Activated naive CD4-positive, alpha-beta T cell treated with anti-CD3 and anti-CD28 coated beads for 36 hours (primary cell): ENCODE measurements at regions of chr15 and their contacts with region 1.

Region 1: DNA sequence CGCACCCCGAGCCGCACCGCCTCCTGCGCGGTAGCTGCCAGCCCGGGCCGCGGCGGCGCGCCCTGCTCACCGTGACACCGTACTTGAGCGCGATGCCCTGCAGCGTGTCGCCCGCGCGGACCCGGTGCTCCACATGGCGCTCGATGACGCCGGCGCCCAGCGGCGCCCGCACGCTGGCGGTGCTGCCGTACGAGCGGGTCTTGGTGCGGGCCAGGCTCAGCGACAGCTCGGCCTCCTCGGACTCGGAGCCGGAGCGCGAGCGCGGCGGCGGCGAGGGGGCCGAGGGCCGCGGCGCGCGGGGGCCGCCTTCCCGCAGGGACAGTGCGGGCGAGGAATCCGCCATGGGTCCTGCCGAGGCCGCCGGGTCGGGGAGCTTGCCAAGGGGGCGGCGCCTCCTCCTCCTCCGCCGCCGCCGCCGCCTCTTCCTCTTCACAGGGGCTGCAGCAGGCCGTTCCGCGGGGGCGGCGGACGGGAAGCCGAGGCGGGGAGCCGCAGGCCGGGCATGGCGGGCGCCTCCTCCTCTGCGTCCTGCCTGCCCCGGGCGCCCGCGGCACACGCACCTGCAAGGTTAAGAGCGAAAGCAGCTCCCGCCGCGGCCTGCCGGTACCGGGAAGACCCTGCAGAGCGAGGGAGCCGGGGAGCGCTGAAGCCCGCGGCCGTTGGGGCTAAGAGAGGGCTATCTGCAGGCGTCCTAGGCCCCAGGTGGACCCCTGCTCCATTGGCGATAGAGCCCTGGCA is at the start of gene LYSMD2:
- DNase-seq: peak; percentile 66
- H3K4me3 Mint-ChIP-seq: peak within 1 kb of the TSS; percentile 82
- H3K27ac Mint-ChIP-seq: peak within 1 kb of the TSS; percentile 91
- H3K4me1 Mint-ChIP-seq: peaks cover 54% of the 10 kb centered on the region
- H3K27me3 Mint-ChIP-seq: no peaks in the 10 kb centered on the region
- total RNA-seq, gene LYSMD2: 14.5 to 16.8 TPM

Region 2: DNA sequence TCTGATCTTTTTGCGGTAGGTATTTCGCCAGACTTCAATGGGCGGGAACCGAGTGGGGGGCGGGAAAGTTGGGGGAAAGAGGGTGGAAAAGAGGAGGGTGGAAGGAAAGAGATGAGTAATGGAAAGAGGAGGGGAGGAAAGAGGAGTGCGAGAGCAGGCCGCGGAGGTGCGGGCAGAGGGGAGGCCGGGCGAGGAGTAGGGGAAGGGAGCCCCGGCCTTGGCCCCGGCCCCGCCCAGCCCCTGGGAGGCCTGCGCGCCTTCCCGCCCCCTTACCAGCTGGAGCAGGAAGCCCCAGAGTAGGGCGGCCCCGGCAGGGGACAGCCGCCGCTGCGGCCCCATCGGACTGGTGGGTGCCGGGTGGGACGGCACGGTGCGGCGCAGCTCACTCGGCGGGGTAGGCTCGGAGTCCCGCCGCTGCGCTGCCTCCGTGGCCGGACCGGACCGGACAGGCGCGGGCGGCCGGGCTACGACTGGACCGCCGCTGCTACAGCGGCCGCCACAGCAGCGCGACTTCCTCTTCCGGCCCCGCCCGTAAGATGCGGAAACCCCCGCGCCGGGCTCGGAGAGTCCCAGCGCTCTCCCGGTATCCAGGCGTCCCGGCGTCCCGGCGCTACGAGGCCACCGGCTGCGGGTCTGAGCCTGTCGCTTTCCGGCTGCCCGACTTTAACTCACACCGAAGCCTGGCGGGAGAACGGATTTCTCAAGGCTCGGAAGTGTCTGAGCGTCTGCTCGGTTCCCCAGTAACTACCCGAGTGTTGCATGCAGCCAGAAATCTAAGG is 972.1 kb before region 1 on chr15 and contains the start of gene SPPL2A:
- CTCF ChIA-PET with region 1: no interaction called
- intact Hi-C with region 1: loop called (anchors 5 kb)
- DNase-seq: peak; percentile 93
- H3K4me3 Mint-ChIP-seq: peak within 1 kb of the TSS; percentile 90
- H3K27ac Mint-ChIP-seq: peak within 1 kb of the TSS; percentile 99
- H3K4me1 Mint-ChIP-seq: peaks cover 55% of the 10 kb centered on the region
- H3K27me3 Mint-ChIP-seq: no peaks in the 10 kb centered on the region
- total RNA-seq, gene SPPL2A: 37.7 to 41.6 TPM

Region 3: GRCh38 chr15:51524376-51524775 is 213.1 kb before region 1 on chr15:
- CTCF ChIA-PET with region 1: no interaction called
- intact Hi-C with region 1: no loop called
- DNase-seq: no peak
- H3K4me3 Mint-ChIP-seq: no peak overlapping the region
- H3K27ac Mint-ChIP-seq: no peak overlapping the region
- H3K4me1 Mint-ChIP-seq: no peaks in the 10 kb centered on the region
- H3K27me3 Mint-ChIP-seq: no peaks in the 10 kb centered on the region

Region 4: DNA sequence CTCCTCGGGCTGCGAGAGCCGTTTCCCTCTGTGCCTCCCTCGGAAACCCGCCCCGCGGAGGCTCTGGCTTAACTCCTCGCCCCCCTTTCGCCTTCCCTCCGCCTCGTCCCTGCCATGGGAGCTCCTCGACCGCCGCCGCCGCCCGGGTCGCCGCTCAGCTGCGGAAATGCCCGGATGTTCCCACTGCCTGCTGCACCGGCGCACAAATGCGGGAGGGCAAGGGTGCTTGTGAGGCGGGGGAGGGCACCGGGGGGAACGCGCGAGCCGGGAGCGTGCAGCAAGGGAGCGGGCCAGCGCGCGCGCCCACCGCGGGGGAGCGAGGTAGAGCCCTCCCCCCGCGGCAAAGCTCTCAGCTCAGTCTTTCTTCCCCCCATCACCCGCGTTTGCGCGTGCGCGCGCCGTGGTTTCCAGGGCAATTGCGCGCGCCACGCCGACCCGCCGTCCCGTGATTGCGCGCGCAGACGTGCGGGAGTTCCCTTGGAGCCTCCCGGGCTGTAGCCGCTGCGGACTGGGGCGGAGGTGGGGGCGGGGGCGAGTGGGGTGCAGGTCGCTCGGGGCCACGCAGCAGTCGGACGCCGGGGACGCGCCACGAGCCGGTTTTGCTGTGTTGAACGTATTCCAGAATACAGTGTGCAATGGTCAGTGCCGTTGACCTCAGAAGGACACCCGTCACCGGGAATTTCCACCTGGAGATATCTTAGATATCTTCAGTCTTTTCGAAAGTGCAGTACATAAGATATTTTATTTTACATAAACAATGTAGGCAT is 114.7 kb before region 1 on chr15 and contains the start of gene DMXL2:
- CTCF ChIA-PET with region 1: interaction called, 8 read pairs
- intact Hi-C with region 1: loop called (anchors 2 kb)
- DNase-seq: peak; percentile 76
- H3K4me3 Mint-ChIP-seq: peak within 1 kb of the TSS; percentile 76
- H3K27ac Mint-ChIP-seq: peak within 1 kb of the TSS; percentile 6
- H3K4me1 Mint-ChIP-seq: peaks cover 19% of the 10 kb centered on the region
- H3K27me3 Mint-ChIP-seq: no peaks in the 10 kb centered on the region
- total RNA-seq, gene DMXL2: 10.0 TPM

Region 5: GRCh38 chr15:51726351-51727073 is 10.9 kb before region 1 on chr15:
- CTCF ChIA-PET with region 1: interaction called, 4 read pairs
- intact Hi-C with region 1: loop called (anchors 1 kb)
- DNase-seq: peak; percentile 74
- H3K4me3 Mint-ChIP-seq: no peak overlapping the region
- H3K27ac Mint-ChIP-seq: no peak overlapping the region
- H3K4me1 Mint-ChIP-seq: peaks cover 57% of the 10 kb centered on the region
- H3K27me3 Mint-ChIP-seq: no peaks in the 10 kb centered on the region

Region 6: DNA sequence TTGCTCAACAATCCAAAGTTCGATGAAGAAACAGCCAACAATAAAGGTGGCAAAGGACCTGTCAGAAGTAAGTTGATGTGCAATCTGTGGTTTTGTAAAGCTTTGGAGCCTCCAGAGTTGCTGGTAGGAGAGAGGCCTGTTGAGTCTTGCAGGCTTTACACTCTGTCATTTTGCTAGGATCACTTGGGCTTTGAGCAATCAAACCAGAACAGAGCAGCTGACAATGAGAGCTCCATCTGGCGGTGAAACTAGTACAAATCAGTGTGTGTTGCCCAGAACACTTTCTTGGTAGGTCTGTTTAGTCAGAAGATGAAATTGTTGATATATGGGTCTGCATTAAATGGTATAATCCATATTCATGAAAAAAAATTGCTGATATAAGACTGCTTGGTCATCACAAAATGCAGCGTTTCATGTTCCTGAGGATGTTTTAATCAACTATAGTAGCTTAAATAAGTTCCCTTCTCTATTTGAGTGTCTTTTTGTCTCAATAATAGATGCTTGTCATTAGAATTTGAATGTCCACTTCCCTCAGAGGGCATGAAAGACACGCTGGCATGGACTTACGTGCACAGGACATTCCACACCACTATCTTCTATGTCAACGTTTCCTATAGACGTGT is 39.6 kb after region 1 on chr15:
- CTCF ChIA-PET with region 1: interaction called, 63 read pairs
- intact Hi-C with region 1: loop called (anchors 1 kb)
- DNase-seq: peak; percentile 77
- H3K4me3 Mint-ChIP-seq: no peak overlapping the region
- H3K27ac Mint-ChIP-seq: no peak overlapping the region
- H3K4me1 Mint-ChIP-seq: no peaks in the 10 kb centered on the region
- H3K27me3 Mint-ChIP-seq: no peaks in the 10 kb centered on the region

Region 7: GRCh38 chr15:51814606-51815005 is 77.2 kb after region 1 on chr15:
- CTCF ChIA-PET with region 1: no interaction called
- intact Hi-C with region 1: no loop called
- DNase-seq: no peak
- H3K4me3 Mint-ChIP-seq: no peak overlapping the region
- H3K27ac Mint-ChIP-seq: no peak overlapping the region
- H3K4me1 Mint-ChIP-seq: no peaks in the 10 kb centered on the region
- H3K27me3 Mint-ChIP-seq: no peaks in the 10 kb centered on the region

Region 8: DNA sequence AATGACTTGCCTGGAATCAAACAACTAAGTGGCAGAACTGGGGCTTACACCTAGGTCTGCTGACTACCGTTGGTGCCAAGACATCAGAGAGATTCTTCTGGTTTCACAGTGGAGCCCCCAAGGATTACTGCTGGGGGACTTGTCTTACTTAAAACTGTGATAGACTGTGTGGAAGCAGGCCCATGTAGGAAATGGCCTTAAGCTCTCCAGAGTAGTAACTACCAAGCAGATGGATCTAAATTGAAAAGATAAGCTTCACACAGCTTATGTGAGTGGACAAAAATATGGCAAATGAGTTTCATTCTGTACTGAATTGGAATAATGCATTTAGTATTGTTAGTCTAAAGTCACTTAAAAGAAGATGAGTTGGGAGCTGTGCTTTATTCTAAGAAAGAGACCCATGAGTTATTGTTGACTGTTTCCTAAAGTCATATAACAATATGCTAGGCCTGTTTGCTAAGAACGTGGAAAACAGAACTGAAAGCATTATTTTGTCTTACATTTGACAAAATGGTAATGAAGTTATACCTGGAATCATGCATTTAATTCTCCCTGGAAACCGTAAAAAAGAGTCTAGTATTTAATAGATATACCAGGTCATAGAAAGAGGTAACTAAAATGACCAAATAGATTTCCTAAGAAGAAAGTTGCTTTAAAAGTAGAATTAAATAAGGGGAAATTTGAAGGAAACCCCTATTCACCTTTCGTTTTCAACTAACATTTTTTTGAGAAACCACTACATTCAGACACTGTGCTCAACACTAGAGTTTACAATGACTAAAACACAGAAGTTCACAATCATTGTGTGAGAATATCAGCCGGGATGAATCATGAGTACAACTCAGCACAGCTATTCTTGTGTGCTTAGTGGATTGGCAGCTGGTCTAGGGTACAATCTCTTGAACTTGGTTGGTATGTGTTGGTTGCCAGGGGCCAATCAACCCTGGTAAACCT is 268.6 kb after region 1 on chr15:
- CTCF ChIA-PET with region 1: no interaction called
- intact Hi-C with region 1: loop called (anchors 1 kb)
- DNase-seq: peak; percentile 58
- H3K4me3 Mint-ChIP-seq: no peak overlapping the region
- H3K27ac Mint-ChIP-seq: peak overlapping the region; percentile 30
- H3K4me1 Mint-ChIP-seq: peaks cover 50% of the 10 kb centered on the region
- H3K27me3 Mint-ChIP-seq: peaks cover 6% of the 10 kb centered on the region

Region 9: GRCh38 chr15:52179278-52180195 is 442.1 kb after region 1 on chr15:
- CTCF ChIA-PET with region 1: no interaction called
- intact Hi-C with region 1: loop called (anchors 5 kb)
- DNase-seq: peak; percentile 91
- H3K4me3 Mint-ChIP-seq: peak overlapping the region; percentile 87
- H3K27ac Mint-ChIP-seq: peak overlapping the region; percentile 92
- H3K4me1 Mint-ChIP-seq: peaks cover 19% of the 10 kb centered on the region
- H3K27me3 Mint-ChIP-seq: no peaks in the 10 kb centered on the region